ENCODE measurements at regions of chr11 and their contacts with region 1.

Region 1: DNA sequence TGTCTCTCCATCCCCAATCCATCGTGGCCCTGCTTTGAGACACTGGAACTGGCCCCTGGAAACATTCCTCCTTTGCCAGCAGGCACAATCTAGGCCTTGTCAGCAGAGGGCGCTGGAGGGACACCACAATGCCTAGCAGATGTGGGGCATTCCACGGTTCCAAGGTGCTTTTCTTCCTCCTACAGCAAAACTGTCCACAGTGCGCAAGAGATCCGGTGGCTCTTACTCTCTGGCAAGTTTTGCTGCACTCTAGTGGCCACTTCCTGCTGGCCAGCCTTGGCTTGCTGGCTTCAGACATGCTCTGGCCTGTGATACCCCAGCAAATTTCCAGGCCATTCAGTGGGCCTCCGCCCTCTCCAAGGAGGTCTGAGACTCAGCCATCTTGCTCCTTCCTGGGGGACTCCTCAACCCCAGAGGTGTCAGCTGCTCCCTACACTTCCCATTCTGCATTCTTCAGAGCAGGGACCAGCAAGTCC is 17.1 kb upstream of the RBM4B start:
- DNase-seq: peak; percentile 65 to 89 (median 85)
- ATAC-seq: peak; percentile 95
- H3K4me3 ChIP-seq: no peak overlapping the region
- H3K4me3 Mint-ChIP-seq: no peak overlapping the region
- H3K27ac ChIP-seq: no peak overlapping the region
- H3K27ac Mint-ChIP-seq: no peak overlapping the region
- H3K4me1 ChIP-seq: no peaks in the 10 kb centered on the region
- H3K4me1 Mint-ChIP-seq: no peaks in the 10 kb centered on the region
- H3K27me3 ChIP-seq: no peaks in the 10 kb centered on the region
- H3K27me3 Mint-ChIP-seq: no peaks in the 10 kb centered on the region
- CTCF ChIP-seq: peak; percentile 93

Region 2: DNA sequence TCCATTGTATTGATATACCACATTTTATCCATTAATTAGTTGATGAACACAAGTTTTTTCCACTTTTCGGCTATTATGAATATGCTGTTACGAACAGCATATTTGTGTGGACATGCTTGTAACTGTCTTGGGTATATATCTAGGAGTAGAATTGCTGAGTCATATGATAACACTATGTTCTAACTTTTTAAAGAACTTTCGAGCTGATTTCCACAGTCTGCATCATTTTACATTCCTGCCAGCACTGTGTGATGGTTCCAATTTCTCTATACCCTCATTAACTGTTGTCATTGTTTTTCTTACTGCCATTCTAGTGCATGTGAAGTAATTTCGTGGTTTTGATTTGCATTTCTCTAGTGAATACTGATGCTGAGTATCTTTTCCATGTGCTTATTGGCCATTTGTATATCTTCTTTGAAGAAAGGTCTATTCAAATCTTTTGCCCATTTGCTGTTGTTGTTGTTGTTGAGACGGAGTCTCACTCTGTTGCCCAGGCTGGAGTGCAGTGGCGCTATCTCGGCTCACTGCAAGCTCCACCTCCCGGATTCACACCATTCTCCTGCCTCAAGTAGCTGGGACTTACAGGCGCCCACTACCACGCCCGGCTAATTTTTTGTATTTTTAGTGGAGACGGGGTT is 141.1 kb after region 1 on chr11:
- CTCF ChIA-PET with region 1: interaction called, 33 read pairs
- POLR2A ChIA-PET with region 1: interaction called, 3 read pairs
- intact Hi-C with region 1: loop called in 1 of 2 experiments (anchors 1 kb)
- DNase-seq: no peak
- ATAC-seq: no peak
- H3K4me3 ChIP-seq: no peak overlapping the region
- H3K4me3 Mint-ChIP-seq: no peak overlapping the region
- H3K27ac ChIP-seq: no peak overlapping the region
- H3K27ac Mint-ChIP-seq: no peak overlapping the region
- H3K4me1 ChIP-seq: peaks cover 17% of the 10 kb centered on the region
- H3K4me1 Mint-ChIP-seq: peaks cover 33% of the 10 kb centered on the region
- H3K27me3 ChIP-seq: no peaks in the 10 kb centered on the region
- H3K27me3 Mint-ChIP-seq: no peaks in the 10 kb centered on the region
- CTCF ChIP-seq: no peak

Region 3: GRCh38 chr11:66868726-66869566 is 174.2 kb after region 1 on chr11:
- CTCF ChIA-PET with region 1: interaction called, 28 read pairs
- POLR2A ChIA-PET with region 1: no interaction called
- intact Hi-C with region 1: loop called in 1 of 2 experiments (anchors 1 kb)
- DNase-seq: peak; percentile 57 to 87 (median 81)
- ATAC-seq: peak; percentile 100
- H3K4me3 ChIP-seq: no peak overlapping the region
- H3K4me3 Mint-ChIP-seq: no peak overlapping the region
- H3K27ac ChIP-seq: no peak overlapping the region
- H3K27ac Mint-ChIP-seq: no peak overlapping the region
- H3K4me1 ChIP-seq: peaks cover 8% of the 10 kb centered on the region
- H3K4me1 Mint-ChIP-seq: peaks cover 9% of the 10 kb centered on the region
- H3K27me3 ChIP-seq: no peaks in the 10 kb centered on the region
- H3K27me3 Mint-ChIP-seq: no peaks in the 10 kb centered on the region
- CTCF ChIP-seq: peak; percentile 66

Region 4: DNA sequence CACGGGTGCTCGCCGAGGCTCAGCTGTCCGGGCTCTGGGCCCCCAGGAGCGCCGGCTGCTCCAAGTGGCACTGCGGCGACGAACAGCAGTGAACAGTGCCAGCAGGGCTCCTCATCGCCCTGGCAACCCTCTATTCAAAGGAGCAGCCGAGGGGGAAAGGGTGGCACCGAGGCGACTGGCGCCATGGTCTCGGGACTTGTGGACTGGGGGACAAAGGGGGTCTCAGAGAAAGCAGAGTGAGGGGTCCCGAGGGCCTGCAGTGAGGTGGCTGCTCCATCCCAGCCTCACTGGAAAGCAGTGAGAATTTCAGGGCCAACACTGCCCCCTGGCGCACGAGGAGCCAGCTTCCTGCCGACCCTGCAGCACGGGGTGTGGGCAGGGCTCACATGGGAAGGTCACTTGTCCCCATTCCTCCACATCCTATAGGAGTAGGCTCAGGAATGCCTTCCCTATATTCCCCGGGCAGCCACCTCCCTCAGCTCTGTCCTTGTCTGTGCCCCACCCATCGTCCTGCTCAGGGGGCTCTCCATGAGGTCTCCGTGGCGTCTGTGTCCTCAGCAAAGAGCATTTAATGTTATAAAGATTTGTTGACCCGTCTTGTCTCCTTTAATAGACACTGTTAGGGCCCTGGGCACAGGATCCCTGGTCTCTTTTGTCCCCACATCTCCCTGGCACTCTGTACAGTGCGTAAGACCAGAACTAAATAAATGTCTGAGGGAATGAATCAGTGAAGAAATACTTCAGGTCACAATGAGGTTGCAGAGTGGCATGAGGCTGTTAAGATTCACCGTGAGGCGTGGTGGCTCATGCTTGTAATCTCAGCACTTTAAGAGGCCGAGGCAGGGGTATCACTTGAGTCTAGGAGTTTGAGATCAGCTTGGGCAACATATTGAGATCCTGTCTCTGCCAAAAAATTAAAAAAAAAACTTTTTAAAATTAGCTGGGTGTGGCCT is 188.5 kb after region 1 on chr11:
- CTCF ChIA-PET with region 1: interaction called, 53 read pairs
- POLR2A ChIA-PET with region 1: no interaction called
- intact Hi-C with region 1: loop called (anchors 1 kb)
- DNase-seq: peak; percentile 31 to 69 (median 59)
- ATAC-seq: peak; percentile 29
- H3K4me3 ChIP-seq: no peak overlapping the region
- H3K4me3 Mint-ChIP-seq: no peak overlapping the region
- H3K27ac ChIP-seq: no peak overlapping the region
- H3K27ac Mint-ChIP-seq: no peak overlapping the region
- H3K4me1 ChIP-seq: peaks cover 12% of the 10 kb centered on the region
- H3K4me1 Mint-ChIP-seq: peaks cover 16% of the 10 kb centered on the region
- H3K27me3 ChIP-seq: no peaks in the 10 kb centered on the region
- H3K27me3 Mint-ChIP-seq: no peaks in the 10 kb centered on the region
- CTCF ChIP-seq: peak; percentile 50

Region 5: GRCh38 chr11:66976048-66976467 is 281.3 kb after region 1 on chr11:
- CTCF ChIA-PET with region 1: interaction called, 14 read pairs
- POLR2A ChIA-PET with region 1: no interaction called
- intact Hi-C with region 1: no loop called
- DNase-seq: peak in 4 of 9 experiments; percentile 11 to 34 (median 18)
- ATAC-seq: no peak
- H3K4me3 ChIP-seq: no peak overlapping the region
- H3K4me3 Mint-ChIP-seq: no peak overlapping the region
- H3K27ac ChIP-seq: no peak overlapping the region
- H3K27ac Mint-ChIP-seq: no peak overlapping the region
- H3K4me1 ChIP-seq: no peaks in the 10 kb centered on the region
- H3K4me1 Mint-ChIP-seq: no peaks in the 10 kb centered on the region
- H3K27me3 ChIP-seq: no peaks in the 10 kb centered on the region
- H3K27me3 Mint-ChIP-seq: peaks cover 8% of the 10 kb centered on the region
- CTCF ChIP-seq: peak; percentile 15

Region 6: DNA sequence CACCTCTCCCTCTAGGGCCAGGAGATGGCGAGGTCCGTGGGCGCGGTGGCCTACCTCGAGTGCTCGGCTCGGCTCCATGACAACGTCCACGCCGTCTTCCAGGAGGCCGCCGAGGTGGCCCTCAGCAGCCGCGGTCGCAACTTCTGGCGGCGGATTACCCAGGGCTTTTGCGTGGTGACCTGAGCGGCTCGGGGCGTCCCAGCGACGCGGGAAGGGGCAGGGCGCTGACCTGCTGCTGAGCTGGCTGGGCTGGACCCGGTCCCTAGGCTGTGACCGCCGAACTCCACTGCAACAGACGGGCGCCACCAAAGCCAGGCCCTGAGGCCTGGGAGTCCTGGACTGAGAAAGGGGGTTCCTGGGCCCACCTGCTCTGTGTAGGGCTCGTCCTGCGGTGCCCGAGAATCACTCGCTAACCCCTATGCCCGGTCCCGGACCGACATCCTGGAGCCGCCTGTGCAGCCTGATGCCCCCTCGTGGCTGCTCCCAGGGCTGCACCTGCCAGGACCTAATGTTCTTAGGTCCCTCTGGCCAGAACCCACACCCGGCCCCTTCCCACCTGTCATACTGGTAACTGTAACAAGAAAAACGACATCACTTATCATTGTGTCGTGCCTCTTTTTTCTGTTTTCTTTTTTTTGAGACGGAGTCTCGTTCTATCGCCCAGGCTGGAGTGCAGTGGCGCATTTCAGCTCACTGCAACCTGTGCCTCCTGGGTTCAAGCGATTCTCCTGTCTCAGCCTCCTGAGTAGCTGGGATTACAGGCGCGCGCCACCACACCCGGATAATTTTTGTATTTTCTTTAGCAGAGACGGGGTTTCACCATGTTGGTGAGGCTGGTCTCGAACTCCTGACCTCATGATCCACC is 376.9 kb after region 1 on chr11:
- CTCF ChIA-PET with region 1: no interaction called
- POLR2A ChIA-PET with region 1: no interaction called
- intact Hi-C with region 1: loop called in 1 of 2 experiments (anchors 2 kb)
- DNase-seq: peak; percentile 43 to 81 (median 71)
- ATAC-seq: peak; percentile 96
- H3K4me3 ChIP-seq: peak overlapping the region; percentile 26 to 46
- H3K4me3 Mint-ChIP-seq: peak overlapping the region; percentile 72
- H3K27ac ChIP-seq: no peak overlapping the region
- H3K27ac Mint-ChIP-seq: no peak overlapping the region
- H3K4me1 ChIP-seq: peaks cover 7% of the 10 kb centered on the region
- H3K4me1 Mint-ChIP-seq: peaks cover 4% of the 10 kb centered on the region
- H3K27me3 ChIP-seq: no peaks in the 10 kb centered on the region
- H3K27me3 Mint-ChIP-seq: peaks cover 5% of the 10 kb centered on the region
- CTCF ChIP-seq: peak; percentile 72

Measured in CD8-positive, alpha-beta T cell (primary cell).